AG04450 (cell line): ENCODE measurements at regions of chrX and their contacts with region 1.

Region 1: DNA sequence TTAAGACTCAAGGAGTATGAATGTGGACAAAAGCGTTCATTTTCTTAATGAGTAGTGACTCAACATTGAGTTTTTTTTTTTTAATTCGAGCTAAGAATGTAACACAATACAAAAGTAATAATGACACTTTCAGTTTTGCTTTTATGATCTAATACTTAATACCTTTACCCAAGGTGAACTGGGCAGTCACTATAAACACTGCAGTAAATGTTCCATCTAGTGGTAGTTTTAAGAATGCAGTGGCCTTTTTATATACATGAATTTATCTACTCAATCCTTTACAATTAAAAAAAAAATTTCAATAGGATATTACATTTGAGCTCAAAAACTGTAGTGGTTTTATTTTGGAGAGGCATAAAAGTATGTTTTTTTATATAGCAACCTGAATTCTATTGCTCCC is 33.9 kb downstream of the PDK3 start:
- DNase-seq: no peak
- H3K4me3 ChIP-seq: no peak overlapping the region
- H3K27ac ChIP-seq: no peak overlapping the region
- H3K27me3 ChIP-seq: no peaks in the 10 kb centered on the region
- CTCF ChIP-seq: peak; percentile 57

Region 2: DNA sequence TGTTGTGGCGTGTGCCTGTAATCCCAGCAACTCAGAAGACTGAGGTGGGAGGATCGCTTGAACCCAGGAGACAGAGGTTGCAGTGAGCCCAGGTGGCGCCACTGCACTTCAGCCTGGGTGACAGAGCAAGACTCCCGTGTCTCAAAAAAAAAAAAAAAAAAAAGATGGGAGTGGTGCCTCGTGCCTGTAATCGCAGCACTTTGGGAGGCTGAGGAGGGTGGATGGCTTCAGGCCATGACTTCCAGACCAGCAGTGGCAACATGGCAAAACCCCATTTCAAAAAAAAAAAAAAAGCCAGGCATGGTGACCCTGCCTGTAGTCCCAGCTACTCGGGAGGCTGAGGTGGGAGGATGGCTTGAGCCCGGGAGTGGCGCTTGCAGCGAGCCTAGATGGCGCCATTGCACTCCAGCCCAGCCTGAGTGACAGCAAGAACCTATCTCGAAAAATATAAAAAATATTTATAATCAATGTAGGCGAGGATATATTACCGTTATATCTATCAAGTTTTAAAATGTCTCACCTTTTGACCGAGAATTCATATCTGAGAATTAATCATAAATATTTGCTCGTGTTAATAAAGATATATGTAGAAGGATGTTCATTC is 417.2 kb before region 1 on chrX:
- CTCF ChIA-PET with region 1: no interaction called
- POLR2A ChIA-PET with region 1: no interaction called
- DNase-seq: no peak
- H3K4me3 ChIP-seq: no peak overlapping the region
- H3K27ac ChIP-seq: no peak overlapping the region
- H3K27me3 ChIP-seq: no peaks in the 10 kb centered on the region
- CTCF ChIP-seq: peak; percentile 50

Region 3: GRCh38 chrX:24395775-24396174 is 103.2 kb before region 1 on chrX:
- CTCF ChIA-PET with region 1: interaction called, 58 read pairs
- POLR2A ChIA-PET with region 1: no interaction called
- DNase-seq: peak; percentile 47
- H3K4me3 ChIP-seq: no peak overlapping the region
- H3K27ac ChIP-seq: no peak overlapping the region
- H3K27me3 ChIP-seq: peaks cover 3% of the 10 kb centered on the region
- CTCF ChIP-seq: peak; percentile 71